Endothelial cell of umbilical vein (primary cell): ENCODE measurements at regions of chr5 and their contacts with region 1.

Region 1: GRCh38 chr5:44808435-44809214 is at the start of gene MRPS30:
- DNase-seq: peak; percentile 100
- H3K4me3 ChIP-seq: peak within 1 kb of the TSS; percentile 53 to 89 (median 85)
- H3K27ac ChIP-seq: peak within 1 kb of the TSS; percentile 51
- H3K4me1 ChIP-seq: peaks cover 8% of the 10 kb centered on the region
- H3K27me3 ChIP-seq: no peaks in the 10 kb centered on the region
- CTCF ChIP-seq: peak; percentile 19 to 35
- POLR2A ChIP-seq: peak; percentile 71
- total RNA-seq, gene MRPS30: 32.5 and 33.8 TPM in 2 replicates

Region 2: DNA sequence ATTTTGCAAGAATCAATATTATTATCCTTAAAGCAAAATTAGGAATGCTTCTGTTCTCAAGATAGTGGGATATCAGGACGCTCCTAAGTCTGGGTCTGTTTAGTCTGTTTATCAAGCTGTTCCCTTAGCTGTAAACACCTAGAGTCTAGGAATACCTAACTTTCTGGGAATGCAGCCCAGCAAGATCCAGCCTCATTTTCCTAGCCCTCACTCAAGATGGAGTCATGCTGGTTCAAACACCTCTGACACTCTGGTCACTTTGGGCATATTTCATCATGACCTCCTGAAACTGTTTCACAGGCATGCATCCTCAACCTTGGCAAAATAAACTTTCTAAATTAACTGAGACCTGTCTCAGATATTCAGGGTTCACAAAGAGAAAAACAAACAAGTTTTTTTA is 14.2 kb before region 1 on chr5:
- CTCF ChIA-PET with region 1: no interaction called
- POLR2A ChIA-PET with region 1: interaction called, 3 read pairs
- dilution Hi-C with region 1: no loop called
- intact Hi-C with region 1: loop called (anchors 1 kb)
- DNase-seq: no peak
- H3K4me3 ChIP-seq: no peak overlapping the region
- H3K27ac ChIP-seq: no peak overlapping the region
- H3K4me1 ChIP-seq: peaks cover 5% of the 10 kb centered on the region
- H3K27me3 ChIP-seq: no peaks in the 10 kb centered on the region
- CTCF ChIP-seq: no peak
- POLR2A ChIP-seq: no peak

Region 3: DNA sequence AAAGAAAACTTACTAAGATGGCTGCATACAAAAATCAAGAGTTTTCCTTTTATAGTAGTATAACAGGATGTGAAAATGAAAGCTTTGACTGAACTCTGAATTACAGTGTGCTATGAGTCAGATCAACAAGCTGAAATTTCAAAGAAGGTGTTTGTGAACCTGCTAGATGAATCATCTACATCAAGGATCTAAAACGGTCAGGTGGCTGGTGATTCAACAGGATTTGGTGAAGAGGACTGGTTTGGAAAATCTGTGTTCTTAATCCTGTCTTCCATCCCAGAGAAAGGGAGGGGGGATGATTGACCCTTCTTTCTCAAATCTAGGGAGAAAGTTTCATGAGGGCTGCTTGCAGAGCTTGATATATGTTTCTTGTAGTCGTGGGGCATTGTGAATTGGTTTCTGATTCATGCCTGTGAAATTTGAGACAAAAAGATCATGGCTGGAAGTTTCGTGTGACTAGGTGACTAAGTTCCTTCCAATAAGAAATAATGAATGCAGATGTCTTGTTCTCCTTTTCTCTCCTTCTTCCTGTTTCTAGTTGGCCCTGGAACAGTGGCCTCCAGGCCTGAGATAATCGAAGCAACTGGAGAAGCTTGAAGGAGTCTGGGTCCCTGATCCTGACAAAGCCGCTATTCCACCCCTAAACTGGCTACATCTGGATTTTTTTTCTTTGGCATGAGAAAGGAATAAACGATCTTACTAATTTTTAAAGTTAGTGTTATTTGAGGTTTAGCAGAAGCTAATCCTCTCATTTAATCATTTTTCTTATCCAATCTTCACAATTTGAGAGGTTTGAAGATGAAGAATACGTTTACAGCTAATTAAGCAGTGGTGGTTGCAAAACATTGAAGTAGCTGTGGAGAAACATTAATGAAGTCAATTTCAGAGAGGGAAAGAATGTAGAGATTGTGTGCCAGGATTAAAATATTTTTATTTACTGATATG is 67.3 kb after region 1 on chr5:
- CTCF ChIA-PET with region 1: no interaction called
- POLR2A ChIA-PET with region 1: no interaction called
- dilution Hi-C with region 1: no loop called
- intact Hi-C with region 1: loop called (anchors 2 kb)
- DNase-seq: peak; percentile 89
- H3K4me3 ChIP-seq: no peak overlapping the region
- H3K27ac ChIP-seq: peak overlapping the region; percentile 70
- H3K4me1 ChIP-seq: peaks cover 13% of the 10 kb centered on the region
- H3K27me3 ChIP-seq: no peaks in the 10 kb centered on the region
- CTCF ChIP-seq: no peak
- POLR2A ChIP-seq: no peak